ENCODE measurements at regions of chr1 and their contacts with region 1.

Region 1: DNA sequence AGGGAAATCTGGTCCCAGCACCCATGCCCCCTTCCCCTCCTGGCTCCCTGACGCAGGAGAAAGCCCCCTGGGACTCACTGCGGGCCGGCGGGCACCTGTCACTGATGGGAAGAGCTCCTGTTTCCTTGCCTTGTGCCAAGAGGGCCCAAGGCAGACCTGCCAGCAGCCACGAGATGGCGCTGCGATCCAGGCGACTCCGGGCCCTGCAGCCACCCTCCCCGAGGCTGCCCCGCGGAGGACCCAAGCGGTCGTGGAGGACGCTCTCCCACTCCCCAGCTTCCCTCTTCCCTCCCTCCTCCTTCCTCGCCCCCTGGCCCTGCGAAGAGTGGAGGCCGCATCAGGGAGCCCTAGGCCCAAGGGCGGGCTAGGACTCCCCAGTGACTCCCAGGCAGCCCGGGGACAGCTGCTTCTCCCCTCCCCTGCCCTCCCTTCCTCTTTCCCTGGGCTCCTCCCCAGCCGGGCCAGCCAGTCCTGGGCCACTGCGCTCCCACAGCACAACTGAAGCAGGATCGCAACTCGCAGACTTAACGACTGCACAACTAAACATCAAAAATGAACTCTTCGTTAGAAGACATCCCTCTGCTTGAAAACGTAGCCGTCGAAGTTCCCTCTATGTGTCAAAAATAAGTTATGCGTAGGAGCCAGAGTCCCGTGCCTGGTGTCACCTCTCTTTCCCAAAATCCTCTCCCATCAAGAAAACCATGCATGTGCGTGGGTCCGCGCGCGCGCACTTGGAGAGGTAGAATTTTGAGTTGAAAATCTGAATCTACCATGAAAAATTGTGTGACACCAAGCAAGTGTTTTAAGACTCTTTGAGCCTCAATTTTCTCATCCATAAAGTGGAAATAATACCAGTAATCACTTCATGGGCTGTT is 34.2 kb downstream of the BATF3 start:
- DNase-seq: peak; percentile 91
- ATAC-seq: peak; percentile 98
- H3K4me3 Mint-ChIP-seq: peak overlapping the region; percentile 57
- H3K27ac Mint-ChIP-seq: peak overlapping the region; percentile 77
- H3K4me1 Mint-ChIP-seq: peaks cover 15% of the 10 kb centered on the region
- H3K27me3 Mint-ChIP-seq: peaks cover 3% of the 10 kb centered on the region

Region 2: GRCh38 chr1:212477014-212477679 is 188.3 kb before region 1 on chr1:
- CTCF ChIA-PET with region 1: interaction called, 23 read pairs
- POLR2A ChIA-PET with region 1: no interaction called
- intact Hi-C with region 1: loop called in 1 of 2 experiments (anchors 1 kb)
- DNase-seq: peak; percentile 87
- ATAC-seq: peak; percentile 93
- H3K4me3 Mint-ChIP-seq: no peak overlapping the region
- H3K27ac Mint-ChIP-seq: no peak overlapping the region
- H3K4me1 Mint-ChIP-seq: peaks cover 11% of the 10 kb centered on the region
- H3K27me3 Mint-ChIP-seq: peaks cover 2% of the 10 kb centered on the region

Region 3: GRCh38 chr1:212683357-212683722 is 17.9 kb after region 1 on chr1:
- CTCF ChIA-PET with region 1: interaction called, 28 read pairs
- POLR2A ChIA-PET with region 1: interaction called, 3 read pairs
- intact Hi-C with region 1: no loop called
- DNase-seq: peak; percentile 82
- ATAC-seq: peak; percentile 37
- H3K4me3 Mint-ChIP-seq: peak overlapping the region; percentile 39
- H3K27ac Mint-ChIP-seq: peak overlapping the region; percentile 83
- H3K4me1 Mint-ChIP-seq: peaks cover 50% of the 10 kb centered on the region
- H3K27me3 Mint-ChIP-seq: no peaks in the 10 kb centered on the region

Region 4: GRCh38 chr1:212774584-212774983 is 109.1 kb after region 1 on chr1:
- CTCF ChIA-PET with region 1: interaction called, 27 read pairs
- POLR2A ChIA-PET with region 1: no interaction called
- intact Hi-C with region 1: no loop called
- DNase-seq: no peak
- ATAC-seq: peak; percentile 17
- H3K4me3 Mint-ChIP-seq: no peak overlapping the region
- H3K27ac Mint-ChIP-seq: no peak overlapping the region
- H3K4me1 Mint-ChIP-seq: peaks cover 38% of the 10 kb centered on the region
- H3K27me3 Mint-ChIP-seq: no peaks in the 10 kb centered on the region

Region 5: GRCh38 chr1:212791676-212792395 is 126.4 kb after region 1 on chr1 and contains the starts of genes NSL1 and TATDN3:
- CTCF ChIA-PET with region 1: interaction called, 88 read pairs
- POLR2A ChIA-PET with region 1: no interaction called
- intact Hi-C with region 1: no loop called
- DNase-seq: peak; percentile 95
- ATAC-seq: peak; percentile 89
- H3K4me3 Mint-ChIP-seq: peak within 1 kb of the TSS; percentile 99
- H3K27ac Mint-ChIP-seq: peak within 1 kb of the TSS; percentile 94
- H3K4me1 Mint-ChIP-seq: peaks cover 43% of the 10 kb centered on the region
- H3K27me3 Mint-ChIP-seq: no peaks in the 10 kb centered on the region
- total RNA-seq, gene NSL1: 39.2 to 40.9 TPM
- total RNA-seq, gene TATDN3: 13.8 to 15.2 TPM

Region 6: GRCh38 chr1:213783893-213784292 is 1118.4 kb after region 1 on chr1:
- CTCF ChIA-PET with region 1: no interaction called
- POLR2A ChIA-PET with region 1: no interaction called
- intact Hi-C with region 1: no loop called
- DNase-seq: no peak
- ATAC-seq: no peak
- H3K4me3 Mint-ChIP-seq: no peak overlapping the region
- H3K27ac Mint-ChIP-seq: no peak overlapping the region
- H3K4me1 Mint-ChIP-seq: peaks cover 15% of the 10 kb centered on the region
- H3K27me3 Mint-ChIP-seq: peaks cover 17% of the 10 kb centered on the region